Ovary (tissue), 10 donors: ENCODE measurements at regions of chr13 and their contacts with region 1.

Region 1: DNA sequence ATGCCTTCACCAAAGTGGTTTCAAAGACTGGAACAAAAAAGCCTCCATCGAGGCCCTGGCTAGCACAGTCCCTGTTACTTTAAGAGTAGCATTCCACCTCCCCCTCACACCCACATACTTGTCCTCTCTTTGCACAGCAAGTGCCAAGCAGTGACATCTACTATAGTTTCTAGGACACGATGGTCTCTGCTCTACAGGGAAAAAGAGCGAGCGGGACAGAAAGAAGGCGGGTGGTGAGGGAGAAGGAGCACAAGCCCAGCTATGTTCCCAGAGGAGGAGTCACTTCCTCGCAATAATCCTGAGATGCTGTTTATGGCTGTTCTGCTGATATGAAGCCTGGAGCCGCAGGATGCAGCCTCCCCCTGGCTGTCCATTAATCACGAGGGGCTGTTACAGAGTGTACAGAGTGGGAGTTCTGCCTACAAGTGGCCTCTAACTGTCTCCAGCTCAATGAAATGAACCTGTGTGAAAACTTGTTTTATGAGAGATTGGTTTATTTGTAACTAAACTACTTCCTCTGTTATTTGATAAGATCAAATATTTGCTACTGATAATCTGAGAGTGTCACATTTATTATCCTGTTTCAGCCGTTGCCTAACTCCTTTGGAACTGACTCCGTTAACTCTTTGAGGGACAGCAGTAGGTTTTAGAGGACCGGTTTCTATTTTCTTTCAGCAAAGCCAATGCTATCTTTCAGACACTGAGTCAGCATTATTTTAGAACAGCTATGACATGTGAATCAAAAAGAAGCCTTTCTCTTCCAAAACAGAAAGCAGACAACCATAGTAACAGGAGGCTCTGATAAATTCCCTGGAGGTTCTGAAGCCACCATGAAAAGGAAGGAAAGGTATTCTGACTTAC is 208.0 kb downstream of the SPRY2 start:
- DNase-seq: peak; percentile 17 to 57 (median 35)
- H3K4me3 ChIP-seq: no peak overlapping the region
- H3K27ac ChIP-seq: peak overlapping the region in 1 of 2 donors; percentile 1
- H3K4me1 ChIP-seq: peaks cover 2% of the 10 kb centered on the region
- H3K27me3 ChIP-seq: no peaks in the 10 kb centered on the region
- CTCF ChIP-seq: no peak
- EP300 ChIP-seq: no peak
- POLR2A ChIP-seq: no peak

Region 2: DNA sequence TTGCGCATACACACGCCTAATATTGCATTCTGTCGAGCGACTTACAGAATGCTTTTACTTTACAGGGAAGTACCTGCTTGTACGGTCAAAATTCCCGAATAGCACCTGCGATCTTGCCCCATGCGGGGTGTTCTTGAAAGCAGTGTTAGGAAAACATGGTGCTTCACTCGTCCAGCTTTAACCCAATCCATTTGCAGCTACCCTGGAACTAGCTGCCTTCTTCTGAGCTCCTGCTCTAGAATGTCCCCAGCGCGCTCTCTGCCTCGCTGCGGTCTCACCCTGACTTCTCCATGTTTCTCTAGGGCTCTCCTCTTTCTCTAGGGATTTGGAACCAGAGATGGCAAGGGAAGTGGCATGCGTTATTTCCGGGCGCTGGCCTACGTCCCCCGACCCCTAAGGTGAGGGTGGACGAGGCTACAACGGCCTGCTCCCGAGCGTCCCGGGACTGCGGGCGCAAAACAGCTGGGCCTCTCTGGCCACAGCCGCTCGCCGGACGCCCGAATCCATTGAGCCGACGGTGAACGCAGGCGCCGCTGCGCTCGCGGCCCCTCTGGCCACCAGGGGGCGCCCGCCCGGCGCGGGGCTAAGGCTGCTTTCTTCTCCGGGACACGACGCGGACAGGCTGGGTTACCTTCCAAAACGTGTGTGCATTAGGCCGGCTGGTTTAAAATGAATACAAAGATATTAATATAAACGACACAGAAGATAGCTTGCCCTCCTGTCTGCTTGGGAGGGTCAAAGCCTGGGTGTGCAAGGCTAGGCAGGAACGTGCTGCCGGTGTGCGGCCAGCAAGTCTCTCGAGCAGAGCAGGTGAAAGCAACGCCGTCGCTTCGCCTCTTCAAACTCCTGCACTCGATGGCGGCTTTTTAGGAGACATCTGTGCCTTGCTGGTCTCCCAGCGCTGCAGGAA is 209.8 kb after region 1 on chr13:
- intact Hi-C with region 1: loop called in 1 of 4 experiments (anchors 5 kb)
- DNase-seq: peak; percentile 74 to 89 (median 82)
- H3K4me3 ChIP-seq: peak overlapping the region; percentile 64
- H3K27ac ChIP-seq: peak overlapping the region; percentile 57 to 85
- H3K4me1 ChIP-seq: no peaks in the 10 kb centered on the region
- H3K27me3 ChIP-seq: no peaks in the 10 kb centered on the region
- CTCF ChIP-seq: peak; percentile 88 to 100 (median 89)
- EP300 ChIP-seq: no peak
- POLR2A ChIP-seq: no peak

Region 3: GRCh38 chr13:80399340-80400163 is 266.6 kb after region 1 on chr13:
- intact Hi-C with region 1: no loop called
- DNase-seq: no peak
- H3K4me3 ChIP-seq: no peak overlapping the region
- H3K27ac ChIP-seq: no peak overlapping the region
- H3K4me1 ChIP-seq: no peaks in the 10 kb centered on the region
- H3K27me3 ChIP-seq: no peaks in the 10 kb centered on the region
- CTCF ChIP-seq: no peak
- EP300 ChIP-seq: no peak
- POLR2A ChIP-seq: no peak